ENCODE measurements at regions of chr17 and their contacts with region 1.

Region 1: GRCh38 chr17:39235555-39236449 is 10.1 kb upstream of the STAC2 start:
- DNase-seq: no peak

Region 2: DNA sequence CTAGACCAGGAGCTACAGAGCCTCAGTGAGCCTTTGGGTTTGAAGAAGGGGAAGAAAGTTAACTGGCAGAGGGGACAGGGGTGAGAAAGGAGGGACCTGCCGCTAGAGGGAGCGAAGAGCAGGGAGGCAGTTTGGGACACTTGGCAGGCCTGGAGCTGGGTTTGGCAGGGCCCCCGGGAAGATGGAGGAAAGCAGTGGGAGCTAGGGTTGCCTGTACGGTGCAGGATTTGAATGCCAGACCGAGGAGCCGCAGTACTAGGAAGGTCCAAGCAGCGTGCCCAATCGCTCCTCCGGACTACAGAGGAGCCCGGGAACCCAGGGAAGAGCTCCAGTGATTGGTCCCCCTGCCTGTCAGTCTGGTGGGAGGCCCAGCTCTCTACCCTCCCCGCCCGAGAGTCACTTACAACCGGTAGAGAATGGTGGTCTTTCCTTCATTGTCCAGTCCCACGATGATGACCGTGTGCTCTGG is 71.1 kb before region 1 on chr17:
- intact Hi-C with region 1: loop called (anchors 10 kb)
- DNase-seq: peak; percentile 92

Region 3: DNA sequence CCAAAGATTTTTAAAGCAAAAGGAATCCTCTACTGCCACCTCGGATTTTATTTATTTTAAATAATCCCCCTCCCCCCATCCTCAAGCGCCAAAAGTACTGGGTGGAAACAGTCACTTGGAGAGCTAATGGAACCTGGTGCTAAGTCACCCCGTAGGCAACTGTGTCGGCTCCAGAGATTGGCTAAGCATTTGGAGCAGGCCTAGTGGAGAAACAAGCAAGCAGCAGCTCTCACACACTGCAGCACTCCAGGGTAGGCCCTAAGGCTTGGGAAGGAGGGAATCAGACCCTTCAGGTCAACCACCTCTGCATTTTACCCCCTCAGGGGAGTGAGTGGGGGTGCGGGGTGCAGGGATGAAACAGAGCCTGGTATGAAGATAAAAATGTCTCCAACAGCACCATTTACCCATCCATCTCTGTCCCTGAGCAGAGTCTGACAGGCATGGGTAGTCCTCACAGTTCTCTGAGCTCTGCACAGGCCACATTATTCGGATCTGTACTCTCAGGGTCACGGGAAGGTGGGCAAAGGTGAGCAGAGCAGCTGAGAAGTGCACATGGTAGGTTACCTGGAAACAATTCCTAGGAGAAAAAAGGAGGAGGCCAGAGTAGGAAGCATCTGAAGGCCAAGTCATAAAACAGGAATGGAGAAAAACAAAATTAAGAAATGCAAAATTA is 17.1 kb after region 1 on chr17:
- intact Hi-C with region 1: no loop called
- DNase-seq: no peak

Region 4: DNA sequence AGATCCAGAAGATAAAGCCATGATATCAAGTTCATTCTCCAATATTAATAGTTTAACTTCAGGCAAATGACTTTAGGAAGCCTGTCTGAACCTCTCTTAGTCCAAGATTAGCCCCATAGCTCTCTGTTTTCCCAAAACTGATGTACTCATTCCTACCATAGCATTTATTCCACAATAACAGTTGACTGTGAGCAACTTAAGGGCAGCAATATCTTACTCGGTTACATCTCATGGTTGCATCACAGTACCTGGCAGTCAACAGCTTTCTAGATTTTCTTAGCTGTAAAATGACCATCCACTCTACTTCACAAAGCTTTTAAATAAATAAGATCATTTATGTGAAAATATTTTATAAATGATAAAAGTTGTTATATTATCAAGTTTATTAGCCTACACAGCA is 48.1 kb after region 1 on chr17:
- intact Hi-C with region 1: no loop called
- DNase-seq: no peak